Activated CD4-positive, alpha-beta T cell treated with anti-CD3 and anti-CD28 coated beads, Interleukin-2, amount 10 ng/mL, durations not matched to agents 24 days and 14 days (primary cell): ENCODE measurements at regions of chr2 and their contacts with region 1.

Region 1: GRCh38 chr2:218292048-218293014 is at the start of gene TMBIM1:
- DNase-seq: peak; percentile 96
- H3K4me3 Mint-ChIP-seq: peak within 1 kb of the TSS; percentile 94
- H3K27ac Mint-ChIP-seq: peak within 1 kb of the TSS; percentile 91
- H3K4me1 Mint-ChIP-seq: peaks cover 45% of the 10 kb centered on the region
- H3K27me3 Mint-ChIP-seq: peaks cover 3% of the 10 kb centered on the region
- total RNA-seq, gene TMBIM1: 62.6 and 63.1 TPM in 2 replicates

Region 2: GRCh38 chr2:217672491-217672900 is 619.8 kb before region 1 on chr2:
- intact Hi-C with region 1: no loop called
- DNase-seq: no peak
- H3K4me3 Mint-ChIP-seq: no peak overlapping the region
- H3K27ac Mint-ChIP-seq: no peak overlapping the region
- H3K4me1 Mint-ChIP-seq: no peaks in the 10 kb centered on the region
- H3K27me3 Mint-ChIP-seq: no peaks in the 10 kb centered on the region

Region 3: GRCh38 chr2:218367415-218368153 is 75.3 kb after region 1 on chr2:
- intact Hi-C with region 1: loop called (anchors 5 kb)
- DNase-seq: peak; percentile 92
- H3K4me3 Mint-ChIP-seq: peak overlapping the region; percentile 80
- H3K27ac Mint-ChIP-seq: peak overlapping the region; percentile 76
- H3K4me1 Mint-ChIP-seq: peaks cover 4% of the 10 kb centered on the region
- H3K27me3 Mint-ChIP-seq: peaks cover 29% of the 10 kb centered on the region